ENCODE measurements at regions of chr11 and their contacts with region 1.

Region 1: DNA sequence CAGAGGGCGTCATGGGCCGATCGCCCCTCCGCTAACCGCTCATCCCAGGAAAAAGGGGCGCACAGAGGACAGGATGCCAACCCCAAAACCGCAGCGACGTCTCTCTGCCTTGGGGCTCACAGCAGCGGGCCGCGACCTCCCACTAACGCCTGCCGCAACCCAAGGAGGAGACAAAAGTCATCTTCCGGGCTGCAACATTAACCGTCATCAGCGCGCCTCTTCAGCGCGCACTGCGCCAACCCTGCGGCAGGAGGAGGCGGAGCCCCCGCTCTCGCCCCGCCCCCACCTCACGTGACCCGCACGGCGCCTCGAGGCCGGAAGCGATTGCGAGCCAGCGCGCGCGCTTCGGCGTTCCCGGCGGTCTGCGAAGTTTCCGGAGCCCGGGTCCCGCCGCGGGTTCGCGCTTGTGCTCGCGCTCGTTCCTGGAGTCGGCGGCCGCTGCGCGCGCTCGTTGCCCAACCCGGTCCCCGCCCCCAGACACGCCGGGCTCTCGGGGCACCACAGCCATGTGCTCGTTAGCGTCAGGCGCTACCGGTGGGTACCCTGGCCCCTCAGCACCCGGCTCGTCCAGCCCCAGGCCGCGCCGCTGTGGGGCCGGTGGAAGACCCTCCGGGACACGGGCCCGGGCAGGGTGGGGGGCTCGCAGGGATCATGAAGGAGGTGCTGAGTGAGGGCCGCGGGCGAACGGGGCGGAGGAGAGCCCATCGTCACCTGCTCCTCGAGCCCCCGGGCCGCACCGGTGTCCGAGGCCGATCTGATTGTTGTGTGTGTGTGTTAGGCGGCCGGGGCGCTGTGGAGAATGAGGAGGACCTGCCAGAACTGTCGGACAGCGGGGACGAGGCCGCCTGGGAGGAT is at the start of gene PRMT3:
- DNase-seq: peak; percentile 99
- total RNA-seq, gene PRMT3: 11.8 to 13.0 TPM

Region 2: DNA sequence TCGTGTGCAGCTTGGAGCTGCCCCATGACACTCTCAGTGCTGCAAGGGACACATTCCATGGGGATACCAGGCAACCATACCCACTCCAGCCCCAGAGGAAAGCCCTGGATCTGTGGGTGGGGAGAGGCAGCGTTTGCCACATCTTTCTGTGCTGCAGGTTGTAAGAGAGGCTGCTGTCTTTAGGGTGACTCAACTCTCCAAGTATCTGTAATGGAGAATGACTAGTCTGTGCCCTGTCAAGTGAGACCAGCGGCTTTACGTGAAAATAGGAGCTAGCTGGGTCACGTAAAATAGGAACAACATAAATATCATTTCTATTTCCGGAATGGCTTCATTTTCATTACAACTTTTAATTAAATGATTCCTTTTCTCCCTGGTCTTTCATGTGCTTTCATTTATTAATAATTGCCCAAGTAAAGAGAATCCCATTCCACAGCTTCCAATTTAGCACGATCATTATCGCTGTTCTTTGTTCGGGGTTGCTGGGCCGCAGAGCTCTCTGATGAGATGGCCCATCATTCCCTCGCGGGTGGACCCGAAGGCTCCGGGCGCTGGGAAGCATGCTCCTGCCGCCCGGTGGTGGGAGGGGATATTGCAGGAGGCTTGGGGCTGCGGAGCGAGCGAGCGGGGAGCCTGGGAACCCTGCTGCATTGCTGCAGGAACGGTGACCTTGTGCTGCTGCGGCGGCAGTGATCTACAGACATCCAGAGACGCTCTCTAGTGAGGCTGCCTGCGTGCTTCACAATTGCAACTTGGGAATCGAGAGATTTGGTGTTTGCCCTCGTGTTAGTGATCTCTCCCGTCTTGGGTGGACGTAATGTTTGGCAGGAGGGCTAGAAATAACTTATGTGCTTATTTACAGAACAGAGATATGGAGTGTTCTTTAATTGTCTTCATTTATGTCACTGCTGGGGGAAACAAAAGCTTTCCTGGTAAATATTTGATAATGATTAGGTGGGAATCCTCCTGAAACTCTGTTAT is 222.5 kb after region 1 on chr11:
- intact Hi-C with region 1: loop called in 1 of 2 experiments (anchors 10 kb)
- DNase-seq: peak; percentile 90

Measured in posterior vena cava (tissue), 2 donors.